A549 (cell line): ENCODE measurements at regions of chr3 and their contacts with region 1.

Region 1: DNA sequence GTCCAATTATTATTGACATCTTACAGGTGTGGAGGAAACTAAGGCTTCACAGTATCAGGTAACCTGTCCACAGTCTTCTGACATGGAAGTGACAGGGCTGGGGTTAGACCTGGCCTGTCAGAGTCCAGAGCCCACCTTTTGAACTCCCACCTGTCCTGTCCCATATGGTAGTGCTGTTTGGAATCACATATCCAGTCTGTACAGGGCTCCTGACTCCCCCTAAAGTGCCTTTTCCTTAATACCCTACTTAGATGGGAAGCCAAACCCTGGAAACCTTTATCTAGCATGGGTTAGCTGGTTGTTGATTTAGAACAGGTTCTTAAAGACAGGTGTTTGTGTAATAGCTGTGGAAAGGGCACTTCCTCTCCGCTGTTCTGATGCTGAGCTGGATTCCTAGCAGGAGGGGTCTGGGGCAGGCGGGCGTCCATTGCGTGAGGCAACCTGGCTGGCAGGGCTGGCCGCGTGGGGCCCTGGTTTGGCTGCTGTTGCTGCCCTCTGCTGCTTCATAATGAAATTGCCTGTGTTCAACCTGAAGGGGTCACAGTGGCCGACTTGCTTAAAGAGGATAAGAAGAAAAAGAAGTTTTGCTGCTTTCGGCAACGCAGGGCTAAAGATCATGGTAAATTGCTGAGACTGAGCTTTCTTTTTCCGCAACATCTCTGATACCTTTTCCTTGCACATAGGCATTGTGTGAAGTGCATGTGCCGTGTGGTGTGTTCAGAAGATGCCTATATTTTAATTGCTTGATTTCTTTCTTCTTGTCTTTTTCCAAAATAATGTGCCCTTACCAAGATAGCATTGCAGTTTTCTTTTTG is 136.2 kb downstream of the CHDH start:
- DNase-seq: peak; percentile 49 to 71
- ATAC-seq: peak; percentile 91 to 93
- H3K4me3 ChIP-seq: no peak overlapping the region
- H3K27ac ChIP-seq: peak overlapping the region; percentile 68 to 80
- H3K4me1 ChIP-seq: peaks cover 38% of the 10 kb centered on the region
- CTCF ChIP-seq: peak; percentile 73
- EP300 ChIP-seq: no peak
- POLR2A ChIP-seq: no peak
- RAD21 ChIP-seq: peak; percentile 86 to 90

Region 2: GRCh38 chr3:53303957-53304356 is 406.1 kb before region 1 on chr3:
- CTCF ChIA-PET with region 1: interaction called, 11 read pairs
- POLR2A ChIA-PET with region 1: no interaction called
- DNase-seq: no peak
- ATAC-seq: no peak
- H3K4me3 ChIP-seq: no peak overlapping the region
- H3K27ac ChIP-seq: no peak overlapping the region
- H3K4me1 ChIP-seq: peaks cover 8% of the 10 kb centered on the region; the same call in 2 of the 3 replicates
- CTCF ChIP-seq: no peak
- EP300 ChIP-seq: no peak
- POLR2A ChIP-seq: no peak
- RAD21 ChIP-seq: no peak

Region 3: GRCh38 chr3:53375019-53375418 is 335.0 kb before region 1 on chr3:
- CTCF ChIA-PET with region 1: interaction called, 78 read pairs
- POLR2A ChIA-PET with region 1: no interaction called
- DNase-seq: peak; percentile 37 to 77
- ATAC-seq: peak; percentile 98 to 99
- H3K4me3 ChIP-seq: no peak overlapping the region
- H3K27ac ChIP-seq: peak overlapping the region; percentile 59 to 73
- H3K4me1 ChIP-seq: 0 out of 3 replicates have a peak, but pooled peaks cover 6% of the 10 kb centered on the region
- CTCF ChIP-seq: peak; percentile 77
- EP300 ChIP-seq: no peak
- POLR2A ChIP-seq: no peak
- RAD21 ChIP-seq: peak; percentile 88 to 96

Region 4: GRCh38 chr3:53502737-53503136 is 207.3 kb before region 1 on chr3:
- CTCF ChIA-PET with region 1: interaction called, 10 read pairs
- POLR2A ChIA-PET with region 1: interaction called, 7 read pairs
- DNase-seq: no peak
- ATAC-seq: no peak
- H3K4me3 ChIP-seq: no peak overlapping the region
- H3K27ac ChIP-seq: no peak overlapping the region
- H3K4me1 ChIP-seq: peaks cover 36% of the 10 kb centered on the region
- CTCF ChIP-seq: no peak
- EP300 ChIP-seq: no peak
- POLR2A ChIP-seq: no peak
- RAD21 ChIP-seq: no peak

Region 5: DNA sequence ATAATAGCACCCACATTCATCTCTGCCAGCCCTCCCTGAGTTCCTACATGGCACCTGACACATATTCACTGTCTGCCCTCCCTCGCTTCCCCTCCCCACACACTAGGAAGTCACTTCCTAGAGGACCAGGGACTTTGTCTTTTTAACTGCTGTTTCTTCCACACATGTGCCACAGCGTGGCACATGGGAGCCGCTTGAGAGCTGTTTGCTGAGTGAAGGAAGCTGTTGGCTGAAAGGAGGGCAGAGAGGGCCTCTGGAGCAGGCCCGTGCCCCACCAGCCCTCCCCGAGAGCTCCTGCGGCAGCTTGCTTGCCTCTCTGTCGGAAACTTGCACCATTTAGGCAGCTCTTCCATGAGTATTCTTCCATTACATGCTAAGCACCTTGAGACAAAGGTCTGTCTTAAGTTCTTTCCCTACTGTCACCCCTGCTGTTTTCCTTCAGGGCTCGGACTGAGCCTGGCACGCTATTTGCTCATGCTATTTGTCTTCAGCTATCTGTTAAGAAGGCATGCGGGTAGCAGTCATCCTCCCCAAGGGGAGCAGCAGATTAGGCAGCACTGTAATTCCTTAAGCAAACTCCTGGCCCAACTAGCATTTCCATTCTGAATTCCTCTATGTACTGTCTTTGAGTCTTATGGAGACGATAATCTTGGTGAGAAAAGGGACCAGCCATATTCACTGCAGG is 143.5 kb before region 1 on chr3:
- CTCF ChIA-PET with region 1: no interaction called
- POLR2A ChIA-PET with region 1: no interaction called
- DNase-seq: no peak
- ATAC-seq: no peak
- H3K4me3 ChIP-seq: no peak overlapping the region
- H3K27ac ChIP-seq: no peak overlapping the region
- H3K4me1 ChIP-seq: peaks cover 10% of the 10 kb centered on the region
- CTCF ChIP-seq: no peak
- EP300 ChIP-seq: no peak
- POLR2A ChIP-seq: no peak
- RAD21 ChIP-seq: no peak

Region 6: GRCh38 chr3:53721187-53722119 is 11.4 kb after region 1 on chr3:
- CTCF ChIA-PET with region 1: interaction called, 11 read pairs
- POLR2A ChIA-PET with region 1: no interaction called
- DNase-seq: no peak
- ATAC-seq: peak in 1 of 2 experiments; percentile 42; a peak in 1 of 6 replicates
- H3K4me3 ChIP-seq: no peak overlapping the region
- H3K27ac ChIP-seq: no peak overlapping the region
- H3K4me1 ChIP-seq: no peaks in the 10 kb centered on the region
- CTCF ChIP-seq: no peak
- EP300 ChIP-seq: no peak
- POLR2A ChIP-seq: no peak
- RAD21 ChIP-seq: no peak

Region 7: DNA sequence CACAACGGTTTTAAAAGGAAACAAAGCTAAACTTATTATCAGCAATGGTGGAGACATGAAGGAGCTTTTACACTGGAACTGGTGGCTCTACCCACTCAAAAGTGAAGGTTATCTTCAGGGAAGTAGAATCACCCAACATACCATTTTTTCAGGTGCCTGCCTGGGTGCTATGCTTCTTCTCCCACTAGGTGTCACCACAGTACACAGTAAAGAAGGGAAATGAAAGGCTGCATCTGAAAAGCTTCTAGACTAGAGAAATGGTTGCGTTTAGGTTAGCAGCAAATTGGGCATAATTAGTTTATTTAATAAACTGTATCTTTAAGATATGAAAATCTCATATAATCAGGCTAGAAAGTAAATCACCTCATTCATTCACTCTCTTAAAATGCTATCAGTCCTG is 228.6 kb after region 1 on chr3:
- CTCF ChIA-PET with region 1: no interaction called
- POLR2A ChIA-PET with region 1: no interaction called
- DNase-seq: peak; percentile 30 to 44
- ATAC-seq: peak; percentile 81 to 83; a peak in 5 of 6 replicates
- H3K4me3 ChIP-seq: no peak overlapping the region
- H3K27ac ChIP-seq: no peak overlapping the region
- H3K4me1 ChIP-seq: no peaks in the 10 kb centered on the region
- CTCF ChIP-seq: peak; percentile 69
- EP300 ChIP-seq: no peak
- POLR2A ChIP-seq: no peak
- RAD21 ChIP-seq: peak; percentile 75 to 82